Activated naive CD4-positive, alpha-beta T cell treated with anti-CD3 and anti-CD28 coated beads for 36 hours (primary cell): ENCODE measurements at regions of chr2 and their contacts with region 1.

Region 1: DNA sequence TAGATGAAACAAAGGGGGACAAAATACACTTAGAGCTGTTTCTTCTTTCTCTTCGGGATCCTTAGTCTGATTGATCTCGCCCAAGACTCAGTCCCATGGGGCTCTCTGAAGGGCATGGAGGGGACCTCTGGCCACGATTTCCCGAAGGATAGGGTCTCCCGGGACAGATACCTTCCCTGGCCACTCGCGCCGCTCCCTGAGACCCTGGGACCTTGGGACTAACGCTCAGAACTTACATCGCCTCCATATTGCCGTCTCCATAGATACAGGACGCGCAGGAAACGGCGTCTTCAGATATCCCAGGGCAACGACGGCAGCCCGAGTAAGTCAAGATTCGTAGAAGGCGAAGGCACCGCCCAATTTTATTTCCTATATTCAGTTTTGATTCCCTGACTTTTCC is at the start of gene CFAP65:
- DNase-seq: peak; percentile 65
- H3K4me3 Mint-ChIP-seq: peak within 1 kb of the TSS; percentile 67
- H3K27ac Mint-ChIP-seq: peak within 1 kb of the TSS; percentile 19
- H3K4me1 Mint-ChIP-seq: peaks cover 8% of the 10 kb centered on the region
- H3K27me3 Mint-ChIP-seq: peaks cover 34% of the 10 kb centered on the region
- total RNA-seq, gene CFAP65: not detected

Region 2: GRCh38 chr2:219308142-219309093 is 267.2 kb after region 1 on chr2:
- CTCF ChIA-PET with region 1: no interaction called
- intact Hi-C with region 1: loop called (anchors 5 kb)
- DNase-seq: peak; percentile 80
- H3K4me3 Mint-ChIP-seq: no peak overlapping the region
- H3K27ac Mint-ChIP-seq: no peak overlapping the region
- H3K4me1 Mint-ChIP-seq: peaks cover 8% of the 10 kb centered on the region
- H3K27me3 Mint-ChIP-seq: peaks cover 52% of the 10 kb centered on the region